Lower leg skin (tissue), 4 donors: ENCODE measurements at regions of chrX and their contacts with region 1.

Region 1: DNA sequence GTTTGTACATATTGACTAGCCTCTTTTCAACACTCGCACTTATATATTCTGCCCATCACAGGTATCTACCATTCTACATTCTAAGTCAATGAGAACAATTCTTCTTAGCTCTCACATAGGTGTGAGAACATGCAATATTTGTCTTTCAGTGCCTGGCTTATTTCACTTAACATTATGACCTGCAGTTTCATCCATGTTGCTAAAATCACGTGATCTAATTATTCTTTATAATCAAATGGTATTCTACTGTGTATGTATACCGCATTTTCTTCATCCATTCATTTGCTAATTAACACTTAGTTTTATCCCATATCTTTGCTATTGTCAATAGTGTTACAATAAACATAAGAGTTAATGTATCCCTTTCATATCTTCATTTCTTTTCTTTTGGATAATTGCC is 1107.0 kb upstream of the POU3F4 start:
- DNase-seq: no peak
- H3K4me3 ChIP-seq: no peak overlapping the region
- CTCF ChIP-seq: no peak
- POLR2A ChIP-seq: no peak

Region 2: GRCh38 chrX:82813671-82814078 is 412.6 kb after region 1 on chrX:
- intact Hi-C with region 1: no loop called
- DNase-seq: peak in 1 of 2 donors; percentile 12
- H3K4me3 ChIP-seq: no peak overlapping the region
- CTCF ChIP-seq: no peak
- POLR2A ChIP-seq: no peak

Region 3: DNA sequence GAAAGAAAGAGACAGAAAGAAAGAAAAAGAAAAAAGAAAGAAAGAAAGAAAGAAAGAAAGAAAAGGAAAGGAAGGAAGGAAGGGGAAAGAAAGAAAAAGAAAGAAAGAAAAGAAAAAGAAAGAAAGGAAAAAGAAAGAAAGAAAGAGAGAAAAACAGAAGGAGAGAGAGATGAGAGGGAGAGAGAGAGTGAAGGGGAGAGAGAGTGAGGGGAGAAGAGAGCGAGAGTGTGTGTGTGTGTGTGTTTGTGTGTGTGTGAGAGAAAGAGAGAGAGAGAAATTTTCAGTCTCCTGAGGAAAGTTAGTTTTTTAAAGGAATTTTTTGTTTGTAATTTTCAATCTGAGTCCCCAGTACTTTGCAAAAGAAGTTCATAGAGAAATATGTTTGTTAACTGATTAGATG is 602.9 kb after region 1 on chrX:
- intact Hi-C with region 1: loop called (anchors 5 kb)
- DNase-seq: no peak
- H3K4me3 ChIP-seq: no peak overlapping the region
- CTCF ChIP-seq: no peak
- POLR2A ChIP-seq: no peak